Naive thymus-derived CD4-positive, alpha-beta T cell (primary cell): ENCODE measurements at regions of chr11 and their contacts with region 1.

Region 1: DNA sequence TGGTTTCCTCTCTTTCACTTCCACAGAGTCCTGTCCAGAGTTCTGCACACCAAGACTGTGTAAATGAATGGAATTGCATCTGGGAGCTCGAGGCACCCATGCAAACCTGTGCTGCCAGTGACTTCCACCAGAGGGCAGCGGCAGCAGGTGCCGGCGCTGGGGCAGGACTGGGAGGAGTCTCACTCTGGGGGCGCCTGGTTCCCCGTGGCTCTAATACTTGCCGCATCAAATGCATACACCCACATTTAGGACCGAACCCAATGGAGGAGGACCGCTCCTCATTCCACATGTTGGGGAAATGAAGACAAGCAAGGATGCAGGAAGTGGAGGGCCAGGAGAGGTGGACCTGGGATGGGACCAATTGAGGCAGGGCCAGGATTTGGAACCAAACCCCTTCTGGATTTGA is 1.1 kb upstream of the CD6 start:
- DNase-seq: peak; percentile 66 to 85 (median 80)
- ATAC-seq: peak; percentile 83
- H3K4me3 ChIP-seq: peak overlapping the region; percentile 83
- H3K4me3 Mint-ChIP-seq: peak overlapping the region; percentile 92 to 98 (median 96)
- H3K27ac ChIP-seq: peak overlapping the region; percentile 96
- H3K27ac Mint-ChIP-seq: peak overlapping the region; percentile 39 to 99 (median 95)
- H3K4me1 ChIP-seq: peaks cover 13 to 17% of the 10 kb centered on the region in 2 donors
- H3K4me1 Mint-ChIP-seq: peaks cover 14 to 29% (median 20%) of the 10 kb centered on the region in 7 donors
- H3K27me3 ChIP-seq: no peaks in the 10 kb centered on the region
- H3K27me3 Mint-ChIP-seq: peaks cover 0 to 11% (median 0%) of the 10 kb centered on the region in 5 donors

Region 2: DNA sequence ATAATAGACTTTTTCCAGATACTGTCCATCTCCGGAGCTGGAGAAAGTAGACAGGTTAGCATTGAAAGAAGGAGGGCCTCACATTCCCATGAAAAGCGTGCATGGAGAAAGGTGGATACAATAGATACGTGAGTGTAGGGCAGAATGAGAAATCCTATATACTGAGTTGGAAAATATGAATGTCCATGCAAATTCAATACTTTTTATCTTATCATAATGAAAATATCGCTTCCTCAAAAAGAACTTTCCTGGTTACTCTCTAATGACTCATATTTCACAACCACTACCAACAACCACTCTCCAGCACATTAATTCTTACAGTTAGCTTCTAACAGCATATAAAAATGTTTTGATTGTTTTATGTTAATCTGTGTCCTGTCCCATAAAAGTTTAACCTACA is 765.5 kb before region 1 on chr11:
- CTCF ChIA-PET with region 1: no interaction called
- POLR2A ChIA-PET with region 1: no interaction called
- intact Hi-C with region 1: no loop called
- DNase-seq: no peak
- ATAC-seq: no peak
- H3K4me3 ChIP-seq: no peak overlapping the region
- H3K4me3 Mint-ChIP-seq: no peak overlapping the region
- H3K27ac ChIP-seq: no peak overlapping the region
- H3K27ac Mint-ChIP-seq: no peak overlapping the region
- H3K4me1 ChIP-seq: no peaks in the 10 kb centered on the region
- H3K4me1 Mint-ChIP-seq: no peaks in the 10 kb centered on the region
- H3K27me3 ChIP-seq: no peaks in the 10 kb centered on the region
- H3K27me3 Mint-ChIP-seq: peaks cover 0 to 14% (median 13%) of the 10 kb centered on the region in 5 donors

Region 3: GRCh38 chr11:60985991-60986915 is 15.9 kb after region 1 on chr11:
- CTCF ChIA-PET with region 1: interaction called, 8 read pairs
- POLR2A ChIA-PET with region 1: no interaction called
- intact Hi-C with region 1: loop called (anchors 1 to 2 kb)
- DNase-seq: peak; percentile 59 to 99 (median 97)
- ATAC-seq: peak; percentile 93
- H3K4me3 ChIP-seq: peak overlapping the region; percentile 42
- H3K4me3 Mint-ChIP-seq: peak overlapping the region; percentile 75 to 96 (median 88)
- H3K27ac ChIP-seq: peak overlapping the region; percentile 96
- H3K27ac Mint-ChIP-seq: peak overlapping the region; percentile 91 to 100 (median 99)
- H3K4me1 ChIP-seq: peaks cover 62 to 88% of the 10 kb centered on the region in 2 donors
- H3K4me1 Mint-ChIP-seq: peaks cover 49 to 99% (median 94%) of the 10 kb centered on the region in 7 donors
- H3K27me3 ChIP-seq: no peaks in the 10 kb centered on the region
- H3K27me3 Mint-ChIP-seq: no peaks in the 10 kb centered on the region

Region 4: DNA sequence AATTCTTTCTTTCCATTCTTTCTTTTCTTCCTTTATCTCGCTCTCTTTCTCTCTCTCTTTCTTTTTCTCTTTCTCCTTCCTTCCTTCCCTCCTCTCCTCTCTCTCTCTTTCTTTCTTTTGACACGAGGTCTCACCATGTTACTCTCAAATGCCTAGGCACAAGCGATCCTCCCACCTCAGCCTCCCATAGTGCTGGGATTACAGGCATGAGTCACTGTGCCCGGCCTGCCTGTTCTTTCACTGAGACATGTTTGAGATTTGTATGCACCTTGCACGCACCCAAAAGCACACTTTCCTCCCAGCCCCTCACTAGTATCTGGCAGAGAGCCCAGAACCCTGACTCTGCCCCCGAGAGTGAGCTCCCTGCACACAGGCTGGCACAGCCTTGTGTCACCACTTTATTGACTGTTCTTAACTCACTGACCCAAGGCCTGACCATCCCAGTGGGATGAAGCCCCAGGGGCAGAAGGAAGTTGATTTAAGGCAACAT is 57.9 kb after region 1 on chr11:
- CTCF ChIA-PET with region 1: interaction called, 8 read pairs
- POLR2A ChIA-PET with region 1: interaction called, 4 read pairs
- intact Hi-C with region 1: loop called in 1 of 2 experiments (anchors 2 kb)
- DNase-seq: peak in 3 of 9 donors; percentile 46 to 80 (median 60)
- ATAC-seq: peak; percentile 6
- H3K4me3 ChIP-seq: peak overlapping the region; percentile 30
- H3K4me3 Mint-ChIP-seq: peak overlapping the region; percentile 78 to 91 (median 86)
- H3K27ac ChIP-seq: peak overlapping the region; percentile 76
- H3K27ac Mint-ChIP-seq: peak overlapping the region; percentile 91 to 99 (median 97)
- H3K4me1 ChIP-seq: peaks cover 43 to 56% of the 10 kb centered on the region in 2 donors
- H3K4me1 Mint-ChIP-seq: peaks cover 62 to 97% (median 90%) of the 10 kb centered on the region in 7 donors
- H3K27me3 ChIP-seq: no peaks in the 10 kb centered on the region
- H3K27me3 Mint-ChIP-seq: no peaks in the 10 kb centered on the region

Region 5: GRCh38 chr11:61102667-61103571 is 132.5 kb after region 1 on chr11:
- CTCF ChIA-PET with region 1: interaction called, 5 read pairs
- POLR2A ChIA-PET with region 1: interaction called, 6 read pairs
- intact Hi-C with region 1: loop called (anchors 1 to 2 kb)
- DNase-seq: peak in 3 of 9 donors; percentile 39 to 47 (median 40)
- ATAC-seq: peak; percentile 28
- H3K4me3 ChIP-seq: peak overlapping the region; percentile 100
- H3K4me3 Mint-ChIP-seq: peak overlapping the region in 1 of 10 donors; percentile 97
- H3K27ac ChIP-seq: peak overlapping the region; percentile 98
- H3K27ac Mint-ChIP-seq: no peak overlapping the region
- H3K4me1 ChIP-seq: peaks cover 39 to 46% of the 10 kb centered on the region in 2 donors
- H3K4me1 Mint-ChIP-seq: peaks cover 17 to 48% (median 40%) of the 10 kb centered on the region in 7 donors
- H3K27me3 ChIP-seq: no peaks in the 10 kb centered on the region
- H3K27me3 Mint-ChIP-seq: no peaks in the 10 kb centered on the region

Region 6: DNA sequence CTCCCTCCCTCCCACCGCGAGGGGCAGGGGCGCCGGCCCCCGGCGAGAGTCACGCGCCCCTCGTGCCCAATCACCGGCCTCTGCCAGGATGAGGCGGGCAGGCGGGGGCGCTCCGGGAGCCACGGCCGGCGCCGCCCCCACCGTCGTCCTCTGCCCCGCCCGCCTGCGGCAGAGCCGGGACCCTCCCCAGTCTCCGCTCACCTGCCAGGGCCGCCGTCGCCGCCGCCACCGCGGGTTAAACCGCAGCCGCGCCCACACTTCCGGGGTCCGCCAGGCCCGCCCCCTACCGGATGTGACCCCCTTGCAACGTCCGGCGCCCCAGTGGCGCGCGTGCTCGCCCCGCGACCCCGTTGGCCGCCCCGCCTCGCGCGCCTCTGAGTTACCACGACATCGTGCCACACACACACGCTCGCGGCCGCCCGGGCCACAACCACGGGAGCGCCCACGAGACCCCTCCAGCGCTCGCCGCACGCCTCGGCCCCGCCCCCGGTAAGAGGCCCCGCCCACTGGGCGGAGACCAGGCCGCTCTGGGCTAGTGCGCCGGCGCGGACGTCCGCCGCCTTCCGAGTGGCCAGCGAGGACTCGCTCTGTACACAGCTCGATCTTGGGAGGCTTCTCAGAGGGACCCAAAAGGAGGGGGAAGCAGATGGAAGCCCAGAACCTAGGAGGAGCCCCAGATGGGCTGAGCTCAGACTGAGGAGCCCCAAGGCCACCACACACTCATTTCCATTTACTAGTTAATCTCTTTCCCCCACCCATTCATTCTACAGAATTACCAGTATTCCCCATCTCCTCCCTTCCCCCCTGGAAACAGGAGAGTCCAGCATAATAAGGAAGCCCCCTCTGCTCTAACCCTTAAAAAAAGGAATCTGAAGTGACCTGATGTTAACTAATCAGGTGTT is 191.1 kb after region 1 on chr11 and contains the start of gene VPS37C:
- CTCF ChIA-PET with region 1: no interaction called
- POLR2A ChIA-PET with region 1: interaction called, 4 read pairs
- intact Hi-C with region 1: loop called in 1 of 2 experiments (anchors 1 kb)
- DNase-seq: peak; percentile 80 to 99 (median 87)
- ATAC-seq: peak; percentile 83
- H3K4me3 ChIP-seq: peak within 1 kb of the TSS; percentile 74
- H3K4me3 Mint-ChIP-seq: peak within 1 kb of the TSS; percentile 85 to 96 (median 90)
- H3K27ac ChIP-seq: peak within 1 kb of the TSS; percentile 78
- H3K27ac Mint-ChIP-seq: peak within 1 kb of the TSS; percentile 84 to 96 (median 94)
- H3K4me1 ChIP-seq: peaks cover 7 to 14% of the 10 kb centered on the region in 2 donors
- H3K4me1 Mint-ChIP-seq: peaks cover 31 to 62% (median 48%) of the 10 kb centered on the region in 7 donors
- H3K27me3 ChIP-seq: no peaks in the 10 kb centered on the region
- H3K27me3 Mint-ChIP-seq: no peaks in the 10 kb centered on the region
- total RNA-seq, gene VPS37C: 4.1 to 12.0 (median 7.9) TPM